Colonic mucosa (tissue), 4 donors: ENCODE measurements at regions of chr12 and their contacts with region 1.

Region 1: DNA sequence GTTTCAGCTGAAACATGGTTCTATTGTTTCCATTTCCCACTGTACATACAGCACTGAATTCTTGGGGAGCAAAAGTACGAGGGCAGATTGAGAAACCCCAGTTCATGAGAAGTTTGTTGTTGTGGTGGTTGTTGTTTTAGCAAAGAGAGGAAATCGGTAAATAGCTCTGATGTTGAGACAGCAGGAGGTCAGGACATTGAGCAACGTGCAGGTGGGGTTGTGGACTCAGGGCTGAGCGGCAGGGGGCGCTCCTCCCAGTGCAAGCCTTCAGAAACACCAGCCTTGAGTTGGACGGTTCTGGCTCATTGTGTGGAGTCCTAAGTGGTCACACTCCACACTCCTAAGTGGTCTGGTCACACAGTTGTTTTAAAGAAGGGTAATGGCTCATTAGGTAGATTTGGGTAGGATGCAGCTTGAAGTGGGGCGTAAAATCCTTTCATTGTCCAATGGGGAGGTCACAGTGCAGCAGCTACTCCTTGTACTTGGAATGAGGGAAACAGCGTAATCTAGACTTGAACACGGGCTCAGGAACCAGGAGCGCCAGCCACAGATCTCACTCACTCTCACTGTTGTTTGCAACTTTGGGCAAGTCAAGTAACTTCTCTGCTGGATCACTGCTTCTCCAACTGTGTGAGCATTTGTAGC is 14.5 kb upstream of the PWP1 start:
- DNase-seq: peak; percentile 32
- H3K4me3 ChIP-seq: no peak overlapping the region
- H3K27ac ChIP-seq: no peak overlapping the region
- H3K4me1 ChIP-seq: no peaks in the 10 kb centered on the region
- H3K27me3 ChIP-seq: peaks cover 4% of the 10 kb centered on the region
- CTCF ChIP-seq: peak; percentile 57

Region 2: DNA sequence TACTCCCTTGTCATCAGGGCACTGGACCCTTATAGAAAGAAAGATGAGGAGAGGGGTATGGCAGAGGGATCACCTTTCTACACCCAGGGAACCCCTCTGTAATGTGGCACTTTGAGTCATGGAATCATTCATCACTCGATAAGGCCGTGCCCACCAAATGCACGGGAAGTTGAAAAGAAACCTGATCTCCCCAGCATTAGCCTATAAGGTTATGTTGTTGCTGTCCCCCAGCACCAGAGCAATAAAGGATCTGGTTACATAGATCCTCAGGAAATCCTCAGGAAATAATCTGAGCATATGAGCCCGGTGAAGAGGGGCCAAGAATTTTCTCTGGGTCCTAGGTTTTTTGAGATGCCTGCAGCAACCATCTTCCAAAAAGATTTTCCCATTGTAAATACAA is 428.9 kb before region 1 on chr12:
- intact Hi-C with region 1: no loop called
- DNase-seq: no peak
- H3K4me3 ChIP-seq: no peak overlapping the region
- H3K27ac ChIP-seq: no peak overlapping the region
- H3K4me1 ChIP-seq: no peaks in the 10 kb centered on the region
- H3K27me3 ChIP-seq: no peaks in the 10 kb centered on the region
- CTCF ChIP-seq: no peak

Region 3: GRCh38 chr12:107884769-107885694 is 213.9 kb after region 1 on chr12:
- intact Hi-C with region 1: loop called (anchors 2 kb)
- DNase-seq: peak; percentile 53
- H3K4me3 ChIP-seq: no peak overlapping the region
- H3K27ac ChIP-seq: no peak overlapping the region
- H3K4me1 ChIP-seq: no peaks in the 10 kb centered on the region
- H3K27me3 ChIP-seq: no peaks in the 10 kb centered on the region
- CTCF ChIP-seq: peak; percentile 50

Region 4: GRCh38 chr12:108017472-108018057 is 346.4 kb after region 1 on chr12:
- intact Hi-C with region 1: no loop called
- DNase-seq: no peak
- H3K4me3 ChIP-seq: no peak overlapping the region
- H3K27ac ChIP-seq: no peak overlapping the region
- H3K4me1 ChIP-seq: no peaks in the 10 kb centered on the region
- H3K27me3 ChIP-seq: no peaks in the 10 kb centered on the region
- CTCF ChIP-seq: no peak